Breast epithelium (tissue), 4 donors: ENCODE measurements at regions of chr2 and their contacts with region 1.

Region 1: DNA sequence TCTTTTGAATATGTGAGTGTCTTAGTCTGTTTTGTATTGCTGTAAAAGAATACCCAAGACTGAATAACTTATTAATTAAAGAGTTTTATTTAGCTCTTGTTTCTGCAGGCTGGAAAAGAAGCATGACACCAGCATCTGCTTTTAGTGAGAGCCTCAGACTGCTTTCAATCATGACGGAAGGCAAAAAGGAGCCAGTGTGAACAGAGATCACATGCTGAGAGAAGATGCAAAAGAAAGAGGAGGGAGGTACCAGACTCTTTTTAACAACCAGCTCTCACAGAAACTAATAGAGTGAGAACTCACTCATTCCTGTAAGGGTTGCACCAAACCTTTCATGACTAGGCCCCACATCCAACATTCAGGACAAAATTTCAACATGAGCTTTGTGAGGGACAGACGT is 101.6 kb upstream of the HNMT start:
- DNase-seq: no peak
- H3K4me3 ChIP-seq: no peak overlapping the region
- H3K27ac ChIP-seq: no peak overlapping the region
- H3K4me1 ChIP-seq: no peaks in the 10 kb centered on the region
- H3K27me3 ChIP-seq: no peaks in the 10 kb centered on the region
- CTCF ChIP-seq: no peak
- POLR2A ChIP-seq: no peak

Region 2: DNA sequence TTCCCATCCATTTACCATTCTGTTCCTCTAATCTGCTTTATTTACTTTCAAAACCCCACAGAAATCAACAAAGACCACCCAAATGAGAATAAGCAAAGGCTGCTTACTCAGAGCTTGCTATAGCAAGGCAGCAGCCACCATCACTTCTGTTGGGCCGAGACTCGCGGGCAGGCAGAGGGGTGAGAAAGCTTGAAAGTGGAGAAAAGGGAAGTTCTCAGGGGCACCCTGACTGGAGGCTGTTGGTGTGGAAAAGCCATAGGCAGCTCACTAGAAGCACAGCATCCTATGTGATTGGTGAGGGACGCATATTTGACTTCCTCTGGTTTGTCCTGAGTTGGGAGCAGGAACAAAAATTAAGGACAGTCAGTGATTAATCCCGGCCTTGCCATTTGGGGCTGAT is 1367.0 kb before region 1 on chr2:
- intact Hi-C with region 1: loop called (anchors 5 kb)
- DNase-seq: no peak
- H3K4me3 ChIP-seq: no peak overlapping the region
- H3K27ac ChIP-seq: no peak overlapping the region
- H3K4me1 ChIP-seq: no peaks in the 10 kb centered on the region
- H3K27me3 ChIP-seq: no peaks in the 10 kb centered on the region
- CTCF ChIP-seq: no peak
- POLR2A ChIP-seq: no peak